ENCODE measurements at regions of chr9 and their contacts with region 1.

Region 1: DNA sequence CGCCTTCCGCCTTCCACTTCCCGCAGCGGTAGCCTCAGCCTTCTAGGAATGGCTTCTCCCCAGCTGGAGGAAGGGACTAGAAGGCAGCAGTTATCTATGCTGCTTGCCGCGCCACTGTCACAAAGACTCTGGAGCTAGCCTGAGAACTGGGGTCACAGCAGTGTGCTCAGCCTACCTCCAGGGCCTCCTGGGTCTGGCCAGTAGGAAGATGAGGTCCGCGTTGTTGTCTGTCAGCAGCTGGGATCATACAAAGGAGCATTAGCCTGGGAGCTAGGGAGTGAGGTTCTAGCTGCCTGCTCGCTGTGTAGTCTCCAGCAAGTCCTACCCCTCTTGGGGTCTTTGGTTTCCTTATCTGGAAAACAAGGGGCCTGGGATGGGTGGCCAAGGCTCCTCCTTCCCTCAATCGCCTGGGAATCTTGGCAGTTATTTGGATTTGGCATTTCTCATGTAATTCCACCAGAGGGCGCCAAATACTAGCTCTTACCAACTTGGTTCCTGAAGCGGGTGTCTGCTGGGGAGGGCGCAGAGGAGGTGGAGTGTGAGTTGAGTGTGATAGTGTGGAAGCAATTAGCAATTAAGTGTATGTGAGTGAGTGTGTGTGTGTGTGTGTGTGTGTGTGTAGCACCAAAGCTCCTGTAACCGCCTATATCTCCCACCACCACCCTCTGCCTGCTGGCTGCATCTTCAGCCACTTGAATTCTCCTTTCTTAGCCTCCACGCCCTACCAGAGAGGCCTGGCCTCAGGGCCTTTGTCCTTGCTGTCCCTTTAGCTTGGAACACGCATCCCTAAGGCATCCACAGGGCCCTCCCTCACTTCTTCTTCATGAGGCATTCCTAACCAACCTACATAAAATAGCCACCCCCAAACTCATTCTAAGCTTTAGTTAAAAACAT is 97.1 kb downstream of the ENTREP1 start:
- DNase-seq: peak; percentile 77
- H3K4me3 ChIP-seq: no peak overlapping the region
- H3K27ac ChIP-seq: no peak overlapping the region
- H3K4me1 ChIP-seq: no peaks in the 10 kb centered on the region
- H3K27me3 ChIP-seq: no peaks in the 10 kb centered on the region

Region 2: GRCh38 chr9:69149321-69149807 is 272.8 kb before region 1 on chr9:
- in situ Hi-C with region 1: no loop called
- DNase-seq: peak; percentile 80
- H3K4me3 ChIP-seq: 0 out of 2 replicates have a peak overlapping the region, but pooled peaks have one; percentile 19
- H3K27ac ChIP-seq: no peak overlapping the region
- H3K4me1 ChIP-seq: peaks cover 14% of the 10 kb centered on the region; the same call in 1 of the 2 replicates
- H3K27me3 ChIP-seq: no peaks in the 10 kb centered on the region

Region 3: GRCh38 chr9:69549310-69550202 is 127.4 kb after region 1 on chr9:
- in situ Hi-C with region 1: loop called (anchors 5 kb)
- DNase-seq: peak; percentile 69
- H3K4me3 ChIP-seq: no peak overlapping the region
- H3K27ac ChIP-seq: no peak overlapping the region
- H3K4me1 ChIP-seq: 0 out of 2 replicates have a peak, but pooled peaks cover 2% of the 10 kb centered on the region
- H3K27me3 ChIP-seq: no peaks in the 10 kb centered on the region

Region 4: DNA sequence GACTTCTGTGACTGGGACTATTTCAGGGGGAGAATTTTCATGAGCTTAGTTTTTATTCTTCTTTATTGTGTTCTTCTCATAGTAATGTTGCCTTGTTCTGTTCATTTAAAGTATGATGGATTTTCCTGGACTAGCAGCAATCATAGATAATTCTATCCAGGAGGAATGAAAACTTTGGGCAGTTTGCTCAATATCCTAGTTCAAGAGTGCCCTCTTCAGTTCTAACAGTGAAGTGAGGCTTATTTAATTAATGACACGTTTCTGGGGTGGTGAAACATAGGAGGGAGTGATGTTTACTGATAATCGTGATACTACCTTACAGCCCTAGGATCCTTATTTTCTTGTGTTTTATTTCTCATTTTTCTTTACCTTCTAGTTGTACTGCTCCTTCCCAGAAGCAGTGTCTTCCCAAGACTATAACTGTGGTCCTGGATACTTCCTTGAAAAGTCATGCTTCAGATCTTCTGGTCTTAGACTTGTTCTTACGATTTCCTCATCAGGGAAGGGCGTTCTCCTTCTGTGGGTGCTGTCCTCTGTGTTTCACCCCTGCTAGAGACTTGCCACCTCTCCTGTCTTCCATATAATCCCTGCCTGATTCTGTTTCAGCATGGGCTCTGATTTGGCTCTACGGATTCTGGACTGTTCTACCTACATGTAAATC is 455.8 kb after region 1 on chr9:
- in situ Hi-C with region 1: loop called (anchors 5 kb)
- DNase-seq: peak; percentile 76
- H3K4me3 ChIP-seq: no peak overlapping the region
- H3K27ac ChIP-seq: no peak overlapping the region
- H3K4me1 ChIP-seq: peaks cover 10% of the 10 kb centered on the region
- H3K27me3 ChIP-seq: no peaks in the 10 kb centered on the region